ENCODE measurements at regions of chr1 and their contacts with region 1.

Region 1: GRCh38 chr1:222455188-222455879 is 92.6 kb downstream of the HHIPL2 start:
- DNase-seq: peak; percentile 82
- H3K4me3 ChIP-seq: no peak overlapping the region
- H3K27ac ChIP-seq: no peak overlapping the region
- H3K4me1 ChIP-seq: no peaks in the 10 kb centered on the region
- H3K27me3 ChIP-seq: no peaks in the 10 kb centered on the region
- CTCF ChIP-seq: peak; percentile 92

Region 2: DNA sequence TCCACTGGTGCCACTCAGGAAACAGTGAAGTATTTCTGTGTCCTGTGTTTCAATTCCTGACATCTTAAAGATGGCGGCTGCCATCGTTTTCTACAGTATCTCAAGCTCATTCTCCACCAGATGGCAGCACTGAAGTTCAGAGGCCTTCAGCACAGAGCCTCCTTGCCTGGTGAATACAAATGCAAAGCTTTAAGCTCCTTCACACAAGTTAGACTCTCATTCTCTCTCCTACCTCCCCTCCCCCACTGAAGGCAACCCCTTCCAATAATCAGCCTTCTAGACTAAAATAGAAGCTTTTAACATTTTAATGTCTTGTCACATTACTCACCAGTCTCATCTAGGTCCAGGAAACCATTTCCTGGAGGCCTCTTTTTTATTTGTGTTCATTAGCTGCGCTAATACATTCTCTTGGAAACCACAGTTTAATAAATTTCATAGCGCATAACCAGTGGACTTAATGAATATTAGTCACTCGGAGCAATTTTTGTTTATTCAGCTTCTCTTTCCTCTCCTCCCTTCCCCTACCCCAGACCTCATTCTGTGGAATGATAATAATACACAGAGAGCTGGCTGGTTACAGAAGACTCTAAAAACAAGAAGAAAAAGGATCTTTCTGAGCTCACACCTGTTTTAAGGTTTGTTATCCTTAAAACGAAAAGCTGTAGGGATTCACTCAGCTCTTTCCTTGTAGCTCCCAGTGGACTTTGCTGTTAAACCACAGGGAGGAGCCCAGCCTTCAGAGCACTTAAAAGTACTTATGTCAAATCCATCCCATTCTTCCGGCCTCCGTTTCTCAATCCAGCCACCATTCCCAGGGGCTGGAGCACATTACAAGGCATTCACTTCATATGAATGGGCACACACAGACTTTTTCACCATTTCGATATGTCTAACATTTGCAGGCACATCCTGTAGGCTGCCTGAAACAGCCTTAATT is 1191.2 kb before region 1 on chr1:
- intact Hi-C with region 1: loop called (anchors 10 kb)
- DNase-seq: peak; percentile 34
- H3K4me3 ChIP-seq: no peak overlapping the region
- H3K27ac ChIP-seq: no peak overlapping the region
- H3K4me1 ChIP-seq: no peaks in the 10 kb centered on the region
- H3K27me3 ChIP-seq: no peaks in the 10 kb centered on the region
- CTCF ChIP-seq: peak; percentile 25

Region 3: DNA sequence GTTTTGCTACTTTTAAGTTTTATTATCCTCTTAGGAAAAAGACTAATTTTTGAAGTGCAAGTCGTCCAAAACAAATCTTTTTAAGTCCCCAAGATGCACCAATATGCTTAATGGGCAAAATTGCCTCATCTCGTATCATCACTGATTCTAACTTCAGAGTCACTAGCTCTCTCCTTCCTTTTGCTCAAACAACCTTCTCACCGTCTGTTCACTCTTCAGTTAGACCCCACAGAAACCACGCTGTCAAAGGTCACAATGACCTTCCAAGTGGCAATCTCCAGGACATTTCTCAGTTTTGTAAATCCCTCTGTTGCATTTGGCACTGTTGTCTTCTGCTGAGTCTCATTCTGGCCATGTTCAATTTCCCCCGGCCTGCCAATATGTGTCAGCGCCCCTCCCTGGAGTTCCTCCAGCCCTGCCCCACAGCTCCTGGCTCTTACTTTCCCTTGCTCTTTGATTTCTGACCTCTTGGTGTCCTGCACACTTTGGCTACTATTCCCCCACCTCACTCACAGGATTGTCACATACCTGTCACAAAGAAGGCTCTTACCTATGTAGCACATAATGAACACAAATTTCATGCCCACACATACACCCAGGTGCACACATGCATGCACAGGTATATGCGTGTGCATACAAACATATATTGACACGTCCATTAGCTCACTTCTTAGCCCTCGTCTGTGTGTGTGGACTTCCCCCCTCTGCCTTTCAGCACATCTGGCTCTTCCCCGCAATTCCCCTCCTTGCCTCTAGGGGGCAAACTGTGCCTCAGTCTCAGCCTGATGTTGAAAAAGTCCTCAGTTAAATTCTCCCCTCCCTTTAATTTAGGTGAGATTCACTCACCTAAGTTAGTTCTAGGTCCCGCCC is 359.5 kb before region 1 on chr1:
- intact Hi-C with region 1: loop called (anchors 5 kb)
- DNase-seq: peak; percentile 54
- H3K4me3 ChIP-seq: no peak overlapping the region
- H3K27ac ChIP-seq: no peak overlapping the region
- H3K4me1 ChIP-seq: no peaks in the 10 kb centered on the region
- H3K27me3 ChIP-seq: no peaks in the 10 kb centered on the region
- CTCF ChIP-seq: peak; percentile 87

Region 4: DNA sequence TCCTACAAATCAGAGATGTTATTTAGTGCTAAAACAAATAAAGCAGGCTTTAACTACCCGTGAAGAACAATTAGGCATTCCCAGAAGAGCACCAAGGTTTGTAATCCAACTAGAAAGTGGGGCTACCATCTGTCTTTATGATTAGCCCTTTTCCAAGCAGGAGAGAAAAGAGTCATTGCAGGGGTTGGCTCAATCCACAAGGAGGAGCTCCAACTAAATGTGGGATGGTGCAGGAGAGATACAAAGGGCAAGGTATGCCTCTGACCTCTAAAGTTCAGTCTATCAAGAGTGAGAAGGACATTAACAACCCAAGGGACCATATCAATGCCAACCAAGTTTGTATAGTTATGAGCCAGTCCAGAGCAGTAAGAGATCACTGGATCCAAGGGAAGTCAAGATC is 330.7 kb before region 1 on chr1:
- intact Hi-C with region 1: loop called (anchors 10 kb)
- DNase-seq: no peak
- H3K4me3 ChIP-seq: no peak overlapping the region
- H3K27ac ChIP-seq: no peak overlapping the region
- H3K4me1 ChIP-seq: no peaks in the 10 kb centered on the region
- H3K27me3 ChIP-seq: no peaks in the 10 kb centered on the region
- CTCF ChIP-seq: no peak

Measured in colonic mucosa (tissue), 4 donors.